ENCODE measurements at regions of chr4 and their contacts with region 1.

Region 1: DNA sequence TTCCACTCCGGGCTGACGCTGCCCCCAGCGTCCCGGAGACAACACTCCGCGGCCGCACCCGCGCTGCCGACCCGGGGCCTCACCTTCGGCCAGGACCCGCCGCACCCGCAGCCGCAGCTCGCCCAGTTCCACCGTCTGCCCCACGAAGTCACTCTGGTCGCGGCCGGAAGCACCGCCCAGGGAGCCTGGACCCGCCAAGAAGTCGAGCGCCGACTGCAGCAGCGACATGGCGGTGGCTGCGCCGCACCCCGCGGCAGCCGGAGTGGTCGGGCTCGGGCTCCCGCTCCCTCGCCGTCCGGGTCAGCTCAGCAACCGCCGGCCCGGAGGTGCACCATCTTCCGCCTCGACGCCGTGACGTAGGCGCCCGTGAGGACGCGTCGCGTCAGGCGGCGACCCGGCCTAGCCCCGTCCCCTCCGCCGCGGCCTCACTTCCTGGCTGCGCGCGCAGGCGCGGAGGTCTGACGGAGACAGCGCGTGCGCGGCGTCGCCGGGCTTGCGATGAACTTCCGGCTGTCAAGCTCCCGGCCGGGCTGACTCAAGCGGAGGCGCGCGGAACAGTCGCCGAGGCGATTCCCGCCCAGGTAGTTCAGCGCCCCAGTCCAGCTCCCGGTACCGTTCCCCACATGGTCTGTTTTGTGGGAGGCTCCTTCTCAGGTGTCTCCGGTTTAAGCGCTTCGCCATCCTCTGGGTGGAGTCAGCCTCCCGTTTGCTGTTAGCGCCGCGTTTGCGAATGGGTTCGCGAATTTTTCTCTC is at the starts of genes GAK and TMEM175:
- DNase-seq: peak; percentile 78 to 97 (median 93)

Region 2: DNA sequence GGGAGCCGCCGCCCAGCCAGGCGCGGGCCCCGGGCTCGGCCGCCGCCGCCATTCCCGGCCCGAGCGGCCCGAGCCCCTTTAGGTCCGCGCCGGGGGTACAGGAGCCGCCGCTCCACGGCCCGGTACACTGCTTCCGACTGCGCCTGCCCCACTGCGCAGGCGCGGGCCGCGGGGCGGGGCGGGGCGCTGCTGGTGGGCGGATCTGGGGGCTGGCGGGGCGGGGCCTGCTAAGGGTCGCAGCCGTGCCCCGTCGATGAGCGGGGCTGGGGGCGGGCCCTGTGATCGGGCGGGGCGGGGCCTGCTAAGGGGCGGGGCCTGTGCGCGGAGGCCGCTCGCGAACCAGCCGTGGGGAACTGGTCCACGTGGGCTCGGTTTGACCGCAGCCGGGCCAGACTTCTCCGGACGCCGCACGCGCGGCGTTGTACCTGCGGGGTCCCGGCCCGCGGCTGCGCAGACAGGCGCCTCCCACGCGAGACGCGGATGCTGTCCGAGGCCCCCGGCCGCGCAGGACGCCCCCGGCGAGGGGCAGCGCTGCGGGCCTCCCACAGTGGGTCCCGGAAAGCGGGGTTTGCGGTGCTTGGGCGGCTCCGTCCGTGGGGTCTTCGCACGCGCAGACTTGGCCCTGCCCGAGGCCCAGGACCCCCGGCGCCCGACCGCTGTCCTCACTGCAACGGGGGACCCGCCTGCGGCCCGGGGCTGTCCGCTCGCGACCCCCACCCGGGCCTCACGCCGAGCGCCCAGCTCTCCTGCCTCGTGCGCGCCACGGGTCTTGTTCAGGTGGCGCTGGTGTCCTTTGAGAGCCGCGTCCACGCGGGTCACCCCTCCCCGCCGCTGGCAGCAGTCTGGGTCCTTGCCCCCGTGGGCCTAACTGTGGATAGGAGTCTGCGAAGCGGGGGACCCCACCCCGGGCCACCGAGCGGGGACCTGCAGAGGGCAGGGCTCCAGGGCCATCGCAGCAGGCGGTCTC is 41.6 kb after region 1 on chr4 and contains the start of gene DGKQ:
- intact Hi-C with region 1: loop called (anchors 5 kb)
- DNase-seq: peak; percentile 73 to 96 (median 92)